Activated B cell treated with CpG ODN at 0.5 μM for 24 hours (primary cell): ENCODE measurements at regions of chr17 and their contacts with region 1.

Region 1: DNA sequence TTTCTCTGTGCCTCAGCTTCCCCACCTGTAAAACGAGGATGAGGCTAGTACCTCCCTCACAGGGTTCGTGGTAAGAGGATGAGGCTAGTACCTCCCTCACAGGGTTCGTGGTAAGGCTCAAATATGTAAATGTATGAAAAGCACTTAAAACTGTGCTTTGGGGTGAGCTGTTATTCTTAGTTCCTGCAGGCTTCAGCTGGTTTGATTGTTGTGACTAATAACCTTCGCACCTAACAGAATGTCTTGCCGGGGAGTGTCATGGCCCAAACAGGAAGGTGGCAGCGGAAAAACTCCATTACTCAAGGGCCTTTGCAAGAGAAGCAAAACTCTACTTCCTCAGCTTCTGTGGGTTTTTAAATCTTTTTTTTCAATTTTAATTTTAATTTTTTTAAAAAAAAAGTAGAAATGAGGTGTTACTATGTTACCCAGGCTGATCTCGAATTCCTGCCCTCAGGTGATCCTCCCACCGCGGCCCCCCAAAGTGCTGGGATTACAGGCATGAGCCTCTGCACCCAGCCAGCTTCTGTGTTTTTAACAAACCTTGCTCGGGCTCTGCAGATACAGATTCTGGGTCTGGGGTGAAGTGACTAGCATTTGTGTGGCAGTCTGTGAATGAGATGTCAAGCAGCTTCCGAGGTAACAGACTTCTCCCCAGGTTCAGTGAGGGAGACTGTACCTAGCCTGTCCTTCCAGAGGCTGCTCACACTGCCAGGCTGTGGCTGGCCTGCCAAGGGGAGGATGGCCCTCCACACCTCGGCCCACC is 103.0 kb downstream of the RAB11FIP4 start:
- DNase-seq: no peak
- ATAC-seq: peak; percentile 56
- H3K4me3 Mint-ChIP-seq: peak overlapping the region; percentile 77
- H3K27ac Mint-ChIP-seq: peak overlapping the region; percentile 97
- H3K4me1 Mint-ChIP-seq: peaks cover 93% of the 10 kb centered on the region
- H3K27me3 Mint-ChIP-seq: no peaks in the 10 kb centered on the region
- CTCF ChIP-seq: no peak

Region 2: DNA sequence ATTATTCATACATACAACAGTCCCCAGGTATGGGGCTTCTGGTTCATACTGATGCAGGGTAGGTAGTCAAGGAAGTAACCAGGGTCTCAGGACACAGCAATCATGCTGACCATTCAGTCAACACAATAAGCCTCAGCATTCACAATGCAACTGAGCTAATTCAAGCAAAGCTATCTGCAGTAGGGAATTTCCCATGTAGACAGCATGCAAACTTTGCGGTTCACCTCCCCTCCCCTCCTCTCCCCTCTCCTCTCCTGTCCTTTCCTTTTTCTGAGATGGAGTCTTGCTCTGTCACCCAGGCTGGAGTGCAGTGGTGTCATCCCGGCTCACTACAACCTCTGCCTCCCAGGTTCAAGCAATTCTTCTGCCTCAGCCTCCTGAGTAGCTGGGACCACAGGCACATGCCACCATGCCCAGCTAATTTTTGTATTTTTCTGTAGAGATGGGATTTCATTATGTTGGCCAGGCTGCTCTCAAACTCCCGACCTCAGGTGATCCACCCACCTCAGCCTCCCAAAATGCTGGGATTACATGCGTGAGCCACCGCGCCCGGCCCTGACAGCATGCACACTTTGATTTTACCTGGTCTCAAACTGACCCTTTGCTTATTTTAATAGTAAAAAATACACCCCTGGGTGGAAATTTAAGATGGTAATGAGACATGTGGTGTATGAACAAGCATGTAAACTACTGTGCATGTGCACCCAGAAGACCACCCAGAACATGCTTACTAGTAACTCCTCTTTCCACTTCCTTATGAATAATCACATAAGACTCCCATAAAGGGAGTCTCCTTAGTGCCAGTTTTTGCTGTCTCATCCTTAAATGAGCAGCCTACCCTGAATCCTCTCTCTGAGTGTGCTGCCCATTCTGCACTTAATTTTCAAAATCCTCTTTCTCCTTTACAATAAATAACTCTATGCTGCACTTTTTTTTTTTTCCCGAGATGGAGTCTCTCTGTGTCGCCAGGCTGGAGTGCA is 532.9 kb before region 1 on chr17:
- CTCF ChIA-PET with region 1: no interaction called
- POLR2A ChIA-PET with region 1: no interaction called
- intact Hi-C with region 1: loop called (anchors 2 kb)
- DNase-seq: peak; percentile 53
- ATAC-seq: peak; percentile 72
- H3K4me3 Mint-ChIP-seq: peak overlapping the region; percentile 78
- H3K27ac Mint-ChIP-seq: peak overlapping the region; percentile 88
- H3K4me1 Mint-ChIP-seq: peaks cover 72% of the 10 kb centered on the region
- H3K27me3 Mint-ChIP-seq: no peaks in the 10 kb centered on the region
- CTCF ChIP-seq: no peak

Region 3: DNA sequence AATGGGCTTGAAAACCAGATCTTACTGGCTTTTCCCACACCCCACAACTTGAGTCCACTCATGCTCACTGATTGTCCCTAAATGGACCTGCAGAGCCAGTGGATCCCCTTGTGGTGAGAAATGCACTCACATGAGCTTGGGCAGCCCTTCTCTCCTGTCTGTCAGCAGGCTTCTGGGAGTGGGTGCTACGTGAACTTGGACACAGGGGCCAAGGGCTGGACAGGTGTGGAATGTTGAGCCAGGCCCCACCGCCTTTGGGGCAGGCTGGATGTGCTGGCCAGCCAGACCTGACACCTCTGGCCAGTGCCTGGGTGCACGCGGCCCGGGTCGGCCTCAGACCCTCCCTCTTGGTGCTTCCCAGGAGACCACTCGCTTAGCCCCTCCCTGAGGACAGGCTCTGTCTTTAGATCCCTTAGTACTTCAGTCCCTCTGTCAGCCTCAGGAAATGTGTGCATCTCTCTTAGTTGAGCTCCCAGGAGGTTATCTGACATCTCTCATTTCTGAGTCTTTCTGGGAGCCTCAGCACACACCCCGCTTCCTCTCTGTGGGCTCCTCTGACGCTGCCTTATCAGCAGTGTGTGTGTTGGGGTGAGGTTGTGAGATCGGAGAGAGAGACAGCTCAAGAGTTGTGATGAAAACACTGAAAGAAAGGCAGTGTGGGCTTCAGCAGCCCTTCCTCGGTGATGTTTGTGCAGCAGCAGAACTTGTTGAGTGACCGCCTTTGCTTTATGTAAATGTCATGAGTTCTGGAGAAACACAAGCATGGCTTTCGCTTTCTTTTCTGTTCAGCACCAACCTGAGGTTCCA is 14.1 kb after region 1 on chr17:
- CTCF ChIA-PET with region 1: interaction called, 31 read pairs
- POLR2A ChIA-PET with region 1: interaction called, 207 read pairs
- intact Hi-C with region 1: loop called (anchors 1 kb)
- DNase-seq: no peak
- ATAC-seq: peak; percentile 77
- H3K4me3 Mint-ChIP-seq: peak overlapping the region; percentile 88
- H3K27ac Mint-ChIP-seq: peak overlapping the region; percentile 96
- H3K4me1 Mint-ChIP-seq: peaks cover 65% of the 10 kb centered on the region
- H3K27me3 Mint-ChIP-seq: no peaks in the 10 kb centered on the region
- CTCF ChIP-seq: no peak

Region 4: DNA sequence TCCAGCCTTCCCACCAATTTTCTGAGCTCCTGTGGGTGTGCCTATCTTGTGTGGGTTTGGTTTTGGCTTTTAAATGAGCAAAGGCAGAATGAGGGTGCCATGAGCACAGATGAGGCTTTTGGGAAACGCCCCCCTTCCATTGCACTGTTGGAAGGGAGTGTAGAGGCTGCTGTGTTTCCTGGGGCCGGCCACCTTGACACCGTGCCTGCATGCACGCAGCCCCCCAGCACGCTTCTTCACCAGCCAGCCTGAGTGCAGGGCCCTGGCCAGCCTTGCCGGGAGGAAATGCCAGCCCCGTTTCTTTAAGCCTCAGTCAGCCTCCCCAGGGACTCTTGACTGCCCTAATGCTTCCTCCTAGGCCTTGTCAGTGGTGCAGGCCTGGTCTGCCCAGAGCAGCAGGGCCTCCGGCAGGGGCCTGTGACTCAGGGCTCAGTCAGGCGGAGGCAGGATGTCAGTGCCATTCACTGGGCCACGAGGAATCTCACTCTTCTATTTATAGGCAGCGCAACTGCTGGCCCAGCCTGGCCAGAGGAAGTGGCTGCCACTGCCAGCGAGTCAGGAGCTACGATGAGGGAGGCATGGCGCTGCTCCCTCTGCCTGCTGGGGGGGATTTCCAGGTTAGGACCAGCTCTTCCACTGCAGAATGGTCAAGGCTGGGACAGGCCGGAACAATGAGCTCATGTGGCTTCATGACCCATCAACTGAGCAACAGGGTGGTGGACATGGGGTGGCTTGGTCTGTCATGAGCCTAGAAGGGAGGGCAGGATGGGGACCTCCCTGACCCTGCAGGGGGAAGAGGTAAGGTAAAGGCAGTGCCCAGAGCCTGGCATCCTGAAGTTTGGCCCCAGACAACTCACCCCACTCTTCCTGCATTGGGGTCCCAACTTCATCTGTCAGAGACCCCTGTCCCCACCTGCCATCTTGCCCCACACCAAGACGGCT is 102.2 kb after region 1 on chr17:
- CTCF ChIA-PET with region 1: no interaction called
- POLR2A ChIA-PET with region 1: no interaction called
- intact Hi-C with region 1: loop called (anchors 2 kb)
- DNase-seq: peak; percentile 66
- ATAC-seq: peak; percentile 100
- H3K4me3 Mint-ChIP-seq: peak overlapping the region; percentile 39
- H3K27ac Mint-ChIP-seq: peak overlapping the region; percentile 86
- H3K4me1 Mint-ChIP-seq: peaks cover 38% of the 10 kb centered on the region
- H3K27me3 Mint-ChIP-seq: no peaks in the 10 kb centered on the region
- CTCF ChIP-seq: no peak

Region 5: DNA sequence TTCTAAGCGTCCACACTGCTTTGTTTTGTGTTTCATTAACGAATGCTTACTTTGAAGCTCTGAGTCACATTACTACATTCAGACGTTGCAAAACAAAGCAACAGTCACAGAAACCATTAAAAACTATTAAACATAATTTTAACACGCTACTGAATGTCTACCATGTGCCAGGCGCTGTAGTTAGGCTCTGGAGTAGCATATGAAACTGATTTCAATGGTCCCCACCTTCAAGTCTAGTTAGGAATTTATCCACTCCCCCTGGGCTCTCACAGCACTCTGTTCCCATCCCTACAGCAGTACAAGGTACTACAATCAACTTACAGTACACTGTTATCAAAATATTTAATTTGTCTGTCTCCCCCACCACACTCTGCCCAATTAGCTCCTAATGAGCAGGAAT is 406.4 kb after region 1 on chr17:
- CTCF ChIA-PET with region 1: no interaction called
- POLR2A ChIA-PET with region 1: interaction called, 3 read pairs
- intact Hi-C with region 1: loop called (anchors 5 kb)
- DNase-seq: no peak
- ATAC-seq: no peak
- H3K4me3 Mint-ChIP-seq: no peak overlapping the region
- H3K27ac Mint-ChIP-seq: no peak overlapping the region
- H3K4me1 Mint-ChIP-seq: peaks cover 11% of the 10 kb centered on the region
- H3K27me3 Mint-ChIP-seq: no peaks in the 10 kb centered on the region
- CTCF ChIP-seq: no peak